AG04450 (cell line): ENCODE measurements at regions of chr6 and their contacts with region 1.

Region 1: GRCh38 chr6:43593938-43594337 is 18.0 kb downstream of the POLH start:
- DNase-seq: no peak
- H3K4me3 ChIP-seq: no peak overlapping the region
- H3K27ac ChIP-seq: no peak overlapping the region
- H3K27me3 ChIP-seq: no peaks in the 10 kb centered on the region
- CTCF ChIP-seq: no peak

Region 2: DNA sequence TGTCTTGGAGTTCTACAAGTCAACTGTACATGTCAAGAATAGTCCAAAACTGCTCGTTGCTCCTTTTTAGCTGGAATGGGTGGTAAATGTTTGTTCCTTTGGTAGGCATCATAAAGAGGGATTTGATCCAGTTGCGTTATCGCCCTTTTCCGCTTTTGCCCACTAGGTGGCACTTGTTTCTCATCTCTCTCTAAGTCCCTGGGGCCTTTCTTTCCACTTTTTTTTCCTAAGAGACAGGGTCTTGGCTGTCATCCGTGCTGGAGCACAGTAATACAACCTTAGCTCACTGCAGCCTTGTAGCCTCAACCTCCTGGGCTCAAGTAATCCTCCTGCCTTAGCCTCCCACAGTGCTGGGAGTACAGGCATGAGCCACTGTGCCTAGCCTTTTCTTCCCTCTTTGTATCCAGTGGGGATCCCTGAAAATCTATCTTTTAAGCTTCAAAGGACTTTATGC is 14.4 kb after region 1 on chr6:
- CTCF ChIA-PET with region 1: interaction called, 29 read pairs
- POLR2A ChIA-PET with region 1: no interaction called
- DNase-seq: peak; percentile 61
- H3K4me3 ChIP-seq: no peak overlapping the region
- H3K27ac ChIP-seq: no peak overlapping the region
- H3K27me3 ChIP-seq: no peaks in the 10 kb centered on the region
- CTCF ChIP-seq: peak; percentile 93